RWPE1 (cell line): ENCODE measurements at regions of chr11 and their contacts with region 1.

Region 1: DNA sequence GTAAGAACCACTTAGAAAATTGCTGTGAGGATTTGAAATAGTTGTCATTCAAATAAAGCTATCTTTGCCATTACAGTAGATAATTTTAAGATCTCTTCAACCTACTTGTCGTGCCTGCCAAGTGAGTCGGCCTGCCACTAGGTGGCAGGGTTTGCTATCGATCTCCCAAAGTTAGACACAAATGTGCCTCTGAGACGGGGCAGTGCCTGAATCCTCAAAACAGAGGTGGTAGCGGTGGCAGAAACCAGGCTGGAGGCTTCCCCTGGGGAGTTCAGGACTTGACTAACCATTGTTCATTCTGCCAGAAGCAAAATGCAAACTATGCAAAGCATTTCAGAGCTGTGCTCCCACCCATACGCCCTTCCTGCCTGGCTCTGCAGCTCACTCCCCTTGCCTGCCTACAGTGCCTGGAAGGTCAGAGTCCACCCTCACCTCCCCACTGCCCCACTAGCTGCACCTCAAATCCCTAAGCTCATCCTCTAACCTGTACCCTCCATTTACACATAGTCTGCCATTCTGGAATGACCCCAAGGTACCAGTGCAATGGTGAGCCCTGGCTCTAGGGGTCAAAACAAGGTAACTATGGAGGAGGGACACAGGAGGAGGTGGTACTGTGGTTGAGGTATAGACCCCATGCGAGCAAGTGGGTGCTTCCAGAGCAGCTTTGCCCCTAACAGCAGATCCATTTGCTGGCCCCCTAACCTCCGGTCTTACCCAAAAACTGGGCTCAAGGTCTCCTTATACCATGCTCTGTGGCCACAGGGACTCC is 82.1 kb downstream of the C11orf58 start:
- DNase-seq: peak; percentile 66
- H3K27ac ChIP-seq: no peak overlapping the region
- CTCF ChIP-seq: peak; percentile 88

Region 2: GRCh38 chr11:16809886-16810668 is 10.4 kb before region 1 on chr11:
- CTCF ChIA-PET with region 1: interaction called, 10 read pairs
- POLR2A ChIA-PET with region 1: no interaction called
- DNase-seq: peak; percentile 36
- H3K27ac ChIP-seq: peak overlapping the region; percentile 25; the same call in 1 of the 2 replicates
- CTCF ChIP-seq: no peak

Region 3: DNA sequence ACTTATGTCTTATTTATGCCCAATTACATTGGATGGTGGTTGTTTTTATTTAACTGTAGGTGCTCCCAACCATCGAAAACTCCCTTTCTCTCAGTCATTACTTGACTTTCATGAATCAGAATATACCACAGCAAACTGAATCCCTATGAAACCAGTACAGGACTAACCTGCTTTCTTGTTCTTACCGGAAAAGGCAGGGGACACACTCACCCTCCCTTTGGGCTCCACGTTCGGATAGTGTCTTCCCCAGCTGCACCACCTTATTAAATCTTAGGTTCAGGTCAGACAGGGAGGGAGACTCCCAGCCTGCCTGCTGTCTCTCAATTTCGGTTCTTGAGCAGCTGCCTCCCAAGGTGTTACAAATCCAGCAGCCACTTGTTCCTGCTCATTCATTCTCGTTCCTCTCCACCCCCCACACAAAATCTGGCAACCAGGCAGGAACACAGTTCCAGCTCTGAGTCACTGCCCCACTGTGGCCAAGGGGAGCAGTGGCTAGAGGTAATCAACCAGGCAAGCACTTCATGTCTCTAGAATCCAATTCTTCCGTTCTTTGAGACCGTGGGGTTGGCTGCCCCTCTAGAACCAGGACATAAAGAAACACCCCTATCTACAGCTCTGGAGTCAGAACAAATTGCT is 60.7 kb after region 1 on chr11:
- CTCF ChIA-PET with region 1: interaction called, 27 read pairs
- POLR2A ChIA-PET with region 1: no interaction called
- DNase-seq: peak; percentile 67
- H3K27ac ChIP-seq: no peak overlapping the region
- CTCF ChIP-seq: 0 out of 2 replicates have a peak, but pooled peaks have one; percentile 13

Region 4: GRCh38 chr11:17063171-17064002 is 242.9 kb after region 1 on chr11:
- CTCF ChIA-PET with region 1: interaction called, 12 read pairs
- POLR2A ChIA-PET with region 1: no interaction called
- DNase-seq: peak; percentile 64
- H3K27ac ChIP-seq: no peak overlapping the region
- CTCF ChIP-seq: peak; percentile 74